ENCODE measurements at regions of chr6 and their contacts with region 1.

Region 1: DNA sequence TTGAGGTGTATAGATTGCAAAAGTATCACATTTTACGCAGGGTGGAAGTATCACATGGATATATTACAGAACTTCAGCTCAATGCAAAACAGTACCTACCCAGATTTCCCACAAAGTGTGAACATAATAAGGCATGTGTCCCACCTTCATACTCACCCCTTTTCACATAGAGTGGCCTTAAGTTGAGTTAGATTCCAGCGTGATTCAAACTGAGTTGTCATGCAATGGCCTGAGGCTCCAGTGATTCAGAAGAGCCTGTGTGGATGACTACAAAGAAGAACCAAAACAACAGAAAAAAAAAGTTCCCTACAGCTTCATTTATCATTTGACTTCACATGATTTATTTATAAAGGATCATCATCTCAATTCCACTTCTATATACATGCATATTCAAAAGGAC is 309.7 kb downstream of the SLC35F1 start:
- DNase-seq: no peak
- ATAC-seq: no peak
- H3K4me3 ChIP-seq: no peak overlapping the region
- H3K4me3 Mint-ChIP-seq: no peak overlapping the region
- H3K27ac ChIP-seq: no peak overlapping the region
- H3K27ac Mint-ChIP-seq: no peak overlapping the region
- H3K4me1 ChIP-seq: no peaks in the 10 kb centered on the region
- H3K4me1 Mint-ChIP-seq: no peaks in the 10 kb centered on the region
- H3K27me3 ChIP-seq: no peaks in the 10 kb centered on the region
- H3K27me3 Mint-ChIP-seq: peaks cover 10% of the 10 kb centered on the region
- CTCF ChIP-seq: no peak

Region 2: GRCh38 chr6:118228886-118229285 is 12.1 kb after region 1 on chr6:
- CTCF ChIA-PET with region 1: no interaction called
- POLR2A ChIA-PET with region 1: no interaction called
- intact Hi-C with region 1: no loop called
- DNase-seq: no peak
- ATAC-seq: no peak
- H3K4me3 ChIP-seq: no peak overlapping the region
- H3K4me3 Mint-ChIP-seq: no peak overlapping the region
- H3K27ac ChIP-seq: no peak overlapping the region
- H3K27ac Mint-ChIP-seq: no peak overlapping the region
- H3K4me1 ChIP-seq: no peaks in the 10 kb centered on the region
- H3K4me1 Mint-ChIP-seq: no peaks in the 10 kb centered on the region
- H3K27me3 ChIP-seq: no peaks in the 10 kb centered on the region
- H3K27me3 Mint-ChIP-seq: peaks cover 38% of the 10 kb centered on the region
- CTCF ChIP-seq: no peak

Region 3: GRCh38 chr6:119856136-119856535 is 1639.4 kb after region 1 on chr6:
- CTCF ChIA-PET with region 1: no interaction called
- POLR2A ChIA-PET with region 1: no interaction called
- intact Hi-C with region 1: loop called in 1 of 2 experiments (anchors 10 kb)
- DNase-seq: peak in 3 of 14 experiments; percentile 11 to 44 (median 13)
- ATAC-seq: no peak
- H3K4me3 ChIP-seq: peak overlapping the region; percentile 29
- H3K4me3 Mint-ChIP-seq: peak overlapping the region; percentile 64
- H3K27ac ChIP-seq: no peak overlapping the region
- H3K27ac Mint-ChIP-seq: no peak overlapping the region
- H3K4me1 ChIP-seq: no peaks in the 10 kb centered on the region
- H3K4me1 Mint-ChIP-seq: peaks cover 11% of the 10 kb centered on the region
- H3K27me3 ChIP-seq: no peaks in the 10 kb centered on the region
- H3K27me3 Mint-ChIP-seq: no peaks in the 10 kb centered on the region
- CTCF ChIP-seq: no peak